ENCODE measurements at regions of chr16 and their contacts with region 1.

Region 1: DNA sequence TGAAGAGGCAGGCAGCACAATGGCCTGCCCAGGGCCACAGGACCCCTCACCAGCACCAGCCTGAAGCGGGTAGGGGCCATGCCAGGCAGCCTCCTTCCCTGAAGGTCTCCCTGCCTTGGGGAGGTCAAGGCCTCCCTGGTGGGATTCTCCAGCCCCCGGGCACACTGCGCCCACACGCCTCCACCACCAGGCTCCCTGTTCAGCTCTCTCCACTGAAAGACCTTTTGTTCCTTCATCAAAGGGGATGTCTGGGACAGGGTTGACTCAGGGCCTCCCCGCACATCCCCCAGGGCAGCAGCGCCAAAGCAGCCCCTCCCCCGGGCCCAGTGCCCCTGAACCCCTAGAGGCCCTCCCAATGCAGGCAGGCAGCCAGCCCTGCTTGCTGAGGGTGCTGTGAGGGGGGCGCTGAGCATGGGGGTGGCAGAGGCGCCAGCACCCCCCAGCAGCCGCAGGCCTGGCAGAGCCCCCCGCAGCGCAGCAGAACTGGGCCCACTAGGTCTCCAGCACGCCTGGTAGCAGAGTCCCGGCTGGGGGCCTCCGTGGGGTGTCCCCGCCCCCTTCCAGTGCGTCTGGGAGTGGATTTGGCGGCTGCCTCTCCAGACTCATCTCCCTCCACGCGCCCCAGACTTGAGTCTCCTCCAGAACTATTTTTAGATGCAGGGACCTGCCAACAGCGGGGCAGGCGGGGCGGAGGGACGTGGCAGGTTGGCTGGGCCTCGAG is 13.1 kb downstream of the BCAR1 start:
- DNase-seq: peak in 1 of 3 donors; percentile 40
- ATAC-seq: peak in 2 of 4 donors; percentile 1 to 4
- H3K4me3 ChIP-seq: no peak overlapping the region
- H3K27ac ChIP-seq: no peak overlapping the region
- H3K4me1 ChIP-seq: no peaks in the 10 kb centered on the region
- H3K27me3 ChIP-seq: no peaks in the 10 kb centered on the region
- CTCF ChIP-seq: no peak
- POLR2A ChIP-seq: no peak

Region 2: GRCh38 chr16:75198135-75198600 is 40.1 kb before region 1 on chr16:
- intact Hi-C with region 1: no loop called
- DNase-seq: no peak
- ATAC-seq: no peak
- H3K4me3 ChIP-seq: no peak overlapping the region
- H3K27ac ChIP-seq: no peak overlapping the region
- H3K4me1 ChIP-seq: no peaks in the 10 kb centered on the region
- H3K27me3 ChIP-seq: no peaks in the 10 kb centered on the region
- CTCF ChIP-seq: no peak
- POLR2A ChIP-seq: no peak

Region 3: GRCh38 chr16:75385507-75386152 is 147.3 kb after region 1 on chr16:
- intact Hi-C with region 1: loop called (anchors 5 to 10 kb)
- DNase-seq: no peak
- ATAC-seq: peak; percentile 49 to 82 (median 60)
- H3K4me3 ChIP-seq: no peak overlapping the region
- H3K27ac ChIP-seq: no peak overlapping the region
- H3K4me1 ChIP-seq: peaks cover 0 to 16% (median 0%) of the 10 kb centered on the region in 4 donors
- H3K27me3 ChIP-seq: no peaks in the 10 kb centered on the region
- CTCF ChIP-seq: peak; percentile 73 to 84 (median 76)
- POLR2A ChIP-seq: no peak

Measured in right lobe of liver (tissue), 6 donors.